Mammary epithelial cell (primary cell): ENCODE measurements at regions of chr9 and their contacts with region 1.

Region 1: DNA sequence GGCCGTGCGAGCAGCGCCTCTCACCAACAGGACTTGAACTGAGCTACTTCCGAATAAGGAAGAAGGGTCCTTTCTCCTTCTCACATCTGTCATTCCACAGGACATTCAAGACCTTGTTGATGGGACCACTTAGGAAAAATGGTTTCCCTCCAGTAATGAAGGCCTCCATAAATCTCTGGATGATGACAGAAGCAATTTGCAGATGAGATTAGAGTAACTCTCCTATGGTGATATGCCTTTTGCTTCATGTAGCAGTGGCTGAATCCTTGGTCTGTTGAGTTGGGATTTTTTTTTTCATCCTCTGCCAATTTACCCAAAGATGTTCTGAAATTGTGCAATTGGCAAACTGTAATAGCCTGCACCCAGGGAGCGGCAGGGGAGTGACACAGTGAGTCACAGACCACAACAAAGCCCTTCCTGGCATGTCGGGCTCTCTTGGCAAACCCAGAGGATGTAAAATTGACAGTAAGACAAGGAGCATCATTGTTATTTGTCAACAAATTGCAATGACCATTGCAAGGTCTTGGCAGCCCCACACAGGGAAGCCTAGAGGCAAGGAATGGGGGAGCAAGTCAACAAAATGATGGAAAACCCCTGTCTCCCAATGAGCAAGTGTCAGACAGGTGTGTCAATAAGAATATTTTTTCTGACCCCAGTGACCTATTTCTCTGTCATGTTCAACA is 275.9 kb downstream of the ACTL7B start:
- DNase-seq: peak; percentile 88
- H3K4me3 ChIP-seq: no peak overlapping the region
- H3K27ac ChIP-seq: no peak overlapping the region
- H3K4me1 ChIP-seq: peaks cover 14% of the 10 kb centered on the region
- H3K27me3 ChIP-seq: no peaks in the 10 kb centered on the region
- CTCF ChIP-seq: no peak

Region 2: GRCh38 chr9:108634204-108634603 is 54.3 kb after region 1 on chr9:
- CTCF ChIA-PET with region 1: no interaction called
- dilution Hi-C with region 1: no loop called
- in situ Hi-C with region 1: no loop called
- intact Hi-C with region 1: loop called (anchors 2 kb)
- DNase-seq: peak; percentile 74
- H3K4me3 ChIP-seq: peak overlapping the region in 1 of 3 experiments; percentile 12
- H3K27ac ChIP-seq: peak overlapping the region; percentile 98
- H3K4me1 ChIP-seq: peaks cover 20% of the 10 kb centered on the region
- H3K27me3 ChIP-seq: no peaks in the 10 kb centered on the region
- CTCF ChIP-seq: no peak

Region 3: GRCh38 chr9:108654566-108654965 is 74.7 kb after region 1 on chr9:
- CTCF ChIA-PET with region 1: no interaction called
- dilution Hi-C with region 1: no loop called
- in situ Hi-C with region 1: no loop called
- intact Hi-C with region 1: loop called (anchors 5 kb)
- DNase-seq: peak; percentile 31
- H3K4me3 ChIP-seq: no peak overlapping the region
- H3K27ac ChIP-seq: no peak overlapping the region
- H3K4me1 ChIP-seq: peaks cover 8% of the 10 kb centered on the region
- H3K27me3 ChIP-seq: no peaks in the 10 kb centered on the region
- CTCF ChIP-seq: no peak

Region 4: GRCh38 chr9:108704156-108704852 is 124.4 kb after region 1 on chr9:
- CTCF ChIA-PET with region 1: no interaction called
- dilution Hi-C with region 1: no loop called
- in situ Hi-C with region 1: no loop called
- intact Hi-C with region 1: no loop called
- DNase-seq: no peak
- H3K4me3 ChIP-seq: no peak overlapping the region
- H3K27ac ChIP-seq: no peak overlapping the region
- H3K4me1 ChIP-seq: no peaks in the 10 kb centered on the region
- H3K27me3 ChIP-seq: no peaks in the 10 kb centered on the region
- CTCF ChIP-seq: no peak

Region 5: DNA sequence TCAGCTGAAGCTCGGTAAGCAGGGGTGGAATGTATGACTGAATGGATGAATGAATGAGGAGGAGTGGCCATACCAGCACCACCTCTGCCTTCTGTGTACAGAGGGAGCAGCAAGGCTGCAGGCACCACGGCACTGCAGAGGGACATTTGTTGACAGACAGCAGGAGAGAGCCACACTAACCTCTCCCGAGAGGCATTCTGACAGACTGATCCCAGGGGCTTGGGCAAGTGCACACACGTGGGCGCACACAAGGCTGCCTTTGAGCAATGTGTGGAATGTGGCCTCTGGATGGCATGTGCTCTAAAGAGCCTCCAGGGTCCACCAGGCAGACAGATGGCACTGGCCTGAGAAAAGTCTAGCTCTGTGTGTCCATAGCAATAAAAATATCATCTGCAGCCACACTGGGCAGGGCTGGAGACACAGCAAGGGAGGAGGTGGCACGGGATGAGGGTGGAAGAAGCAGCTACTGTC is 164.0 kb after region 1 on chr9:
- CTCF ChIA-PET with region 1: no interaction called
- dilution Hi-C with region 1: no loop called
- in situ Hi-C with region 1: no loop called
- intact Hi-C with region 1: loop called (anchors 5 kb)
- DNase-seq: peak; percentile 59
- H3K4me3 ChIP-seq: no peak overlapping the region
- H3K27ac ChIP-seq: peak overlapping the region; percentile 28
- H3K4me1 ChIP-seq: peaks cover 13% of the 10 kb centered on the region
- H3K27me3 ChIP-seq: no peaks in the 10 kb centered on the region
- CTCF ChIP-seq: no peak